H1 (cell line): ENCODE measurements at regions of chr2 and their contacts with region 1.

Region 1: GRCh38 chr2:73700131-73700611 is 37.0 kb downstream of the TPRKB start:
- DNase-seq: no peak
- H3K4me3 ChIP-seq: no peak overlapping the region
- H3K27ac ChIP-seq: no peak overlapping the region
- H3K4me1 ChIP-seq: no peaks in the 10 kb centered on the region
- H3K27me3 ChIP-seq: no peaks in the 10 kb centered on the region; a peak in 1 of 7 replicates
- CTCF ChIP-seq: no peak
- EP300 ChIP-seq: no peak
- POLR2A ChIP-seq: no peak
- RAD21 ChIP-seq: no peak

Region 2: DNA sequence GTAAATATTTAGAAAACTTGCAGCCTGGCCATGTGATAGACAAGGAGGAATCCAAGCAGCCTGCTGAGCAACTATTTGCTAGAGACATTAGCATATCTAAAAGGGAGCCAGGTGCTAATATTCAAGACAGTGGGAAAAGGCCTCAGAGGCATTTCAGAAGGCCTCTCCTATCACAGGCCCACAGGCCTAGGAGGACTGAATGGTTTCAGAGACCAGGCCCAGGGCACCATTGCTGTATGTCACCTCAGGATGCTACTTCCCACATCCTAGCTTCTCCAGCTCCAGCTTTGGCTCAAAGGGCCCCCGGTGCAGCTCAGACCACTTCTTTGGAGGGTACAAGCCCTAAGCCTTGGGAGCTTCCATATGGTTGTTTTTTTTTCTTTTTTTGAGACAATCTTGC is 61.7 kb before region 1 on chr2:
- CTCF ChIA-PET with region 1: no interaction called
- POLR2A ChIA-PET with region 1: no interaction called
- DNase-seq: no peak
- H3K4me3 ChIP-seq: no peak overlapping the region
- H3K27ac ChIP-seq: no peak overlapping the region
- H3K4me1 ChIP-seq: no peaks in the 10 kb centered on the region
- H3K27me3 ChIP-seq: no peaks in the 10 kb centered on the region
- CTCF ChIP-seq: no peak
- EP300 ChIP-seq: no peak
- POLR2A ChIP-seq: no peak
- RAD21 ChIP-seq: no peak

Region 3: DNA sequence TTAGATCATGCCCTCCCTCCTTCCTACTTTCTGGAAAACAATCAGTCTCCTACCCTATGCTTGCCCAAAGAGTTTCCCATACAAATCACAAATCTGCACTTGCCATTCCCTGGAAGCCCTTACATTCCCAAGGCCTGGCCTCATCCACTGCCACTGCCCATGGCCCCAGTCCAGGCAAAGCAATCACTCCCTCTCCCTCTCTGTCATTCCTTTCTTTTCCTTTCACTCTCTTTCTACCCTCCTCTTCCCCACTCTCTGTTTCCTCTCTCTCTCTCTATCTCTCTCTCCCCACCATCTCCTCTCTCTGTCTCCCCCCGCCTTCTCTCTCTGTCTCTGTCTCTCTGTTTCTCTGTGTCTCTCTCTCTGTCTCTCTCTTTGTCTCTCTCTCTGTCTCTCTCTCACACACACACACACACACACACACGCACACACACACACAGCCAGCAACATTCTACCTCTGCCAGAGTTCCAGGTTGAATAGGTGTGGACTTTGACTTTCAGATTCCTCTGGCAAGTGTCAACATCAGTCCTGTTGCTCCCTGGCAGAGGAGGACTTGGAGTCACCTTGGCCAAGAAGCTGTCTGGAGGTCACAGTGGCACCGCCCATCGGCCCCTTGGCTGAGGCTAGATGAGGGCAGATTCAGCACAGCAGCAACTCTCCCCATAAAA is 14.3 kb before region 1 on chr2:
- CTCF ChIA-PET with region 1: interaction called, 10 read pairs
- POLR2A ChIA-PET with region 1: no interaction called
- DNase-seq: no peak
- H3K4me3 ChIP-seq: no peak overlapping the region
- H3K27ac ChIP-seq: no peak overlapping the region
- H3K4me1 ChIP-seq: no peaks in the 10 kb centered on the region
- H3K27me3 ChIP-seq: no peaks in the 10 kb centered on the region
- CTCF ChIP-seq: no peak
- EP300 ChIP-seq: no peak
- POLR2A ChIP-seq: no peak
- RAD21 ChIP-seq: no peak

Region 4: GRCh38 chr2:73716543-73717250 is 16.5 kb after region 1 on chr2:
- CTCF ChIA-PET with region 1: no interaction called
- POLR2A ChIA-PET with region 1: no interaction called
- DNase-seq: no peak
- H3K4me3 ChIP-seq: no peak overlapping the region
- H3K27ac ChIP-seq: no peak overlapping the region
- H3K4me1 ChIP-seq: no peaks in the 10 kb centered on the region
- H3K27me3 ChIP-seq: no peaks in the 10 kb centered on the region; a peak in 1 of 7 replicates
- CTCF ChIP-seq: no peak
- EP300 ChIP-seq: no peak
- POLR2A ChIP-seq: no peak
- RAD21 ChIP-seq: no peak